Activated B cell treated with CpG ODN at 0.5 μM for 24 hours (primary cell): ENCODE measurements at regions of chr6 and their contacts with region 1.

Region 1: GRCh38 chr6:148177589-148178233 is 164.9 kb upstream of the SASH1 start:
- DNase-seq: no peak
- ATAC-seq: no peak
- H3K4me3 Mint-ChIP-seq: no peak overlapping the region
- H3K27ac Mint-ChIP-seq: no peak overlapping the region
- H3K4me1 Mint-ChIP-seq: no peaks in the 10 kb centered on the region
- H3K27me3 Mint-ChIP-seq: peaks cover 8% of the 10 kb centered on the region
- CTCF ChIP-seq: no peak

Region 2: GRCh38 chr6:147855803-147856482 is 321.8 kb before region 1 on chr6:
- CTCF ChIA-PET with region 1: no interaction called
- POLR2A ChIA-PET with region 1: no interaction called
- intact Hi-C with region 1: no loop called
- DNase-seq: no peak
- ATAC-seq: no peak
- H3K4me3 Mint-ChIP-seq: no peak overlapping the region
- H3K27ac Mint-ChIP-seq: no peak overlapping the region
- H3K4me1 Mint-ChIP-seq: no peaks in the 10 kb centered on the region
- H3K27me3 Mint-ChIP-seq: no peaks in the 10 kb centered on the region
- CTCF ChIP-seq: no peak

Region 3: GRCh38 chr6:148250975-148251685 is 73.4 kb after region 1 on chr6:
- CTCF ChIA-PET with region 1: no interaction called
- POLR2A ChIA-PET with region 1: no interaction called
- intact Hi-C with region 1: loop called (anchors 2 kb)
- DNase-seq: no peak
- ATAC-seq: no peak
- H3K4me3 Mint-ChIP-seq: no peak overlapping the region
- H3K27ac Mint-ChIP-seq: no peak overlapping the region
- H3K4me1 Mint-ChIP-seq: no peaks in the 10 kb centered on the region
- H3K27me3 Mint-ChIP-seq: peaks cover 2% of the 10 kb centered on the region
- CTCF ChIP-seq: no peak